AG04450 (cell line): ENCODE measurements at regions of chr3 and their contacts with region 1.

Region 1: GRCh38 chr3:184777336-184778004 is 34.5 kb upstream of the VPS8 start:
- DNase-seq: peak; percentile 95
- H3K4me3 ChIP-seq: no peak overlapping the region
- H3K27ac ChIP-seq: no peak overlapping the region
- H3K27me3 ChIP-seq: no peaks in the 10 kb centered on the region
- CTCF ChIP-seq: peak; percentile 75

Region 2: DNA sequence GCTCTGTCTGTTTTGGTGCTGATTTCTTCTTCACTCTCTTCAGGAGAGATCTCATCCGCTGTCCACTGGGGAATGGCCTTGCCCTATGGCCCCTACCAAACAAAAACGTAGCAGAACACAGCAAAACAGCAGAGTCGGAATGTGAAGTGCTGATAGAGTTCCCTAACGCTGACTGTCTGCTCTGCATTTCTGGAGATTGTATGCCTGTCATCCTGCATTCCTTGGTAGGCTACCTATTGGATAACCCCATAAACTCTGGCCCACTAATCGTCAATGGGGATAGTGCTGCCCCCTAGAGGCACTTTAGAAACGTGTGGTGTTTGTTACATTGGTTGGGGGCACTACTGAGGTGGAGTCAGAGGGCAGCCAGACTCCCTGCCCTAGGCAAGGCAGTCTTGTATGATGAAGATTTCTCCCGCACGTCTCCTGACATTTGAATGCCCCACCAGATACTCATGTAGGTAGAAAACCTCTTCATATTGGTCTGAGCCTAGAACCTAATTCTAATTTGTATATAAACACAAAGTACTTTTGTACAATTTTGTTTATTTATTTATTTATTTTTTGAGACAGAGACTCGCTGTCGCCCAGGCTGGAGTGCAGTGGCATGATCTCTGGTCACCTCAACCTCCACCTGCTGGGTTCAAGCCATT is 50.0 kb before region 1 on chr3:
- CTCF ChIA-PET with region 1: interaction called, 11 read pairs
- POLR2A ChIA-PET with region 1: no interaction called
- DNase-seq: no peak
- H3K4me3 ChIP-seq: no peak overlapping the region
- H3K27ac ChIP-seq: no peak overlapping the region
- H3K27me3 ChIP-seq: peaks cover 7% of the 10 kb centered on the region
- CTCF ChIP-seq: peak; percentile 78

Region 3: DNA sequence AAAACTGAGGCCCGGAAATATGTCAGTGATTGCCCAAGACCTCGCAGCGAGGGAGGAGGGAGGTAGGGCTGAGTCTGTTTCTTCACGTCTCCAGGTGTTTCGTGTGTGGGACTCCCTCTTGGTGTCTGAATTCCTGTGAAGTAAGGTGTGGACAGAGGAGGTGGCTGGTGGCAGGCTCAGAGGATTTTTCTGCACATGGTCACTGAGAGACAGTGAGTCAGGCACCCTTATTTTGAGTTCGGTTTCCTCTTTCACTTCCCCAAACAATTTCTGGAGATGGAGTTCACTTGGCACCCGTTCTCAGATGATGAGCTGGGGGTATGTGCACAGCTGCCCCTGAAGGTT is 11.8 kb before region 1 on chr3:
- CTCF ChIA-PET with region 1: interaction called, 12 read pairs
- POLR2A ChIA-PET with region 1: no interaction called
- DNase-seq: no peak
- H3K4me3 ChIP-seq: no peak overlapping the region
- H3K27ac ChIP-seq: no peak overlapping the region
- H3K27me3 ChIP-seq: no peaks in the 10 kb centered on the region
- CTCF ChIP-seq: no peak

Region 4: GRCh38 chr3:184805351-184806038 is 28.0 kb after region 1 on chr3:
- CTCF ChIA-PET with region 1: interaction called, 34 read pairs
- POLR2A ChIA-PET with region 1: no interaction called
- DNase-seq: no peak
- H3K4me3 ChIP-seq: no peak overlapping the region
- H3K27ac ChIP-seq: no peak overlapping the region
- H3K27me3 ChIP-seq: no peaks in the 10 kb centered on the region
- CTCF ChIP-seq: no peak